Panc1 (cell line): ENCODE measurements at regions of chr7 and their contacts with region 1.

Region 1: GRCh38 chr7:110363171-110363570 is 727.8 kb upstream of the LRRN3 start:
- DNase-seq: no peak
- ATAC-seq: no peak
- H3K4me3 ChIP-seq: no peak overlapping the region
- H3K27ac ChIP-seq: no peak overlapping the region
- H3K4me1 ChIP-seq: no peaks in the 10 kb centered on the region
- H3K27me3 ChIP-seq: no peaks in the 10 kb centered on the region
- CTCF ChIP-seq: no peak

Region 2: DNA sequence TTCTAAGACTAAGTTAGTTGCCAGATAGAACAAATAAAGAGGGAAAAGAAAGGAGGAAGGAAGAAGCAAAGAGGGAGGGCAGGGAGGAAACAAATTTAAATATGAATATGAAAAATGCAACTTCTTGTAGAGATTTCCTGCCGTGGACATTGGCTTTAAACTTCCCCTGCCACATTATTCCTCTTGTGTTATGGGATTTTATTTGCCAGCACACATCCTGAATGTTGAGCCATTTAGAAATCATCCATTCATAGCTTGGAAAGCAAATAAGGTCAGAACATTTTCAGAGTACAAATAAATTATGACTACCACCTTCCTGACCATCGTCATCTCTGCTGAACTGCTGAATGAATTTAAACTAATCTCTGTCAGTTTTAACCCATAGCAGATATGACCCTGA is 184.1 kb before region 1 on chr7:
- CTCF ChIA-PET with region 1: no interaction called
- POLR2A ChIA-PET with region 1: no interaction called
- in situ Hi-C with region 1: no loop called
- intact Hi-C with region 1: no loop called
- DNase-seq: no peak
- ATAC-seq: no peak
- H3K4me3 ChIP-seq: no peak overlapping the region
- H3K27ac ChIP-seq: no peak overlapping the region
- H3K4me1 ChIP-seq: no peaks in the 10 kb centered on the region
- H3K27me3 ChIP-seq: no peaks in the 10 kb centered on the region
- CTCF ChIP-seq: no peak

Region 3: DNA sequence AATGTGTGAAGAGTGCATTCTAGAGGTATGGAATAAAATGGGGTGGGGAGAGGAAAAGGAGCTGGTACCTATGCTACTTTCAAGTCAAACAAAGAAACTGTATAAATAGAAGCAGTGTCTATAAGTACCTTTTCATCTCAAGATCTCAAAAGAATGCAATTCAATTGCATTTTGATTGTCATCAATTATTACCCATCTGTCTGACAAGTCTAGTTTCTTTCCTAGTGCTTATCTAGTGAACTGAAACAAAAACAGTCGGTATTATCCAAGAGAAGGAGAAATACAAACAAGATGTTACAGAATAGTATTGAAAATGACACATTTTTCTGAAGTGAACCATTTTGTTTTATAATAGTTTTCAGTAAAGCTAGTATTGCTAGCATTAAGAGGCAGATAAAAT is 26.7 kb before region 1 on chr7:
- CTCF ChIA-PET with region 1: no interaction called
- POLR2A ChIA-PET with region 1: no interaction called
- in situ Hi-C with region 1: no loop called
- intact Hi-C with region 1: no loop called
- DNase-seq: no peak
- ATAC-seq: no peak
- H3K4me3 ChIP-seq: no peak overlapping the region
- H3K27ac ChIP-seq: no peak overlapping the region
- H3K4me1 ChIP-seq: no peaks in the 10 kb centered on the region
- H3K27me3 ChIP-seq: no peaks in the 10 kb centered on the region
- CTCF ChIP-seq: no peak

Region 4: DNA sequence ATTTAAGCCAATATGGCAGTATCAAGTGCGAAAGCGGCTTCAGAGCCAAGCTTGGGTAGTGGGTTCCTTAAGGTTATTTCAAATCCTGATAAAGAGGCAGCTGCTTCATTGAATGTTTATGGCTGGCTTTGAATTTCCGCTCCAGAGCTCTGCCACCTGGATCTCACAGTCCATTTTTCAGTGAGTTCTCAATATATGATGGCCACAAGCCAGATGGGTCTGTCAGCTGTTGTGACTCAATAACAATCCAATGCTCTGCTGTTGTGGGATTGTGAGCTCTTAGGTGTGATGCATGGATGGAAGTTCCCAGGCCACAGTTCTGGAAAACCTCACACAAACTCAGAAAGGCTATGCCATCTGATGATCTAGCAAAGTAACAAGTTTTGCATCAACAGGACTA is 16.1 kb before region 1 on chr7:
- CTCF ChIA-PET with region 1: no interaction called
- POLR2A ChIA-PET with region 1: no interaction called
- in situ Hi-C with region 1: no loop called
- intact Hi-C with region 1: loop called (anchors 1 kb)
- DNase-seq: no peak
- ATAC-seq: no peak
- H3K4me3 ChIP-seq: no peak overlapping the region
- H3K27ac ChIP-seq: no peak overlapping the region
- H3K4me1 ChIP-seq: no peaks in the 10 kb centered on the region
- H3K27me3 ChIP-seq: no peaks in the 10 kb centered on the region
- CTCF ChIP-seq: no peak

Region 5: GRCh38 chr7:110418659-110419280 is 55.6 kb after region 1 on chr7:
- CTCF ChIA-PET with region 1: no interaction called
- POLR2A ChIA-PET with region 1: no interaction called
- in situ Hi-C with region 1: no loop called
- intact Hi-C with region 1: no loop called
- DNase-seq: no peak
- ATAC-seq: no peak
- H3K4me3 ChIP-seq: no peak overlapping the region
- H3K27ac ChIP-seq: no peak overlapping the region
- H3K4me1 ChIP-seq: no peaks in the 10 kb centered on the region
- H3K27me3 ChIP-seq: no peaks in the 10 kb centered on the region
- CTCF ChIP-seq: no peak